HEK293 (cell line): ENCODE measurements at regions of chr6 and their contacts with region 1.

Region 1: GRCh38 chr6:10886691-10887535 is at the start of gene SYCP2L:
- H3K4me3 ChIP-seq: peak within 1 kb of the TSS; percentile 70
- H3K27ac ChIP-seq: peak within 1 kb of the TSS; percentile 77
- H3K4me1 ChIP-seq: no peaks in the 10 kb centered on the region
- CTCF ChIP-seq: peak; percentile 98

Region 2: GRCh38 chr6:10847684-10848083 is 39.2 kb before region 1 on chr6:
- CTCF ChIA-PET with region 1: interaction called, 10 read pairs
- POLR2A ChIA-PET with region 1: interaction called, 6 read pairs
- H3K4me3 ChIP-seq: no peak overlapping the region
- H3K27ac ChIP-seq: no peak overlapping the region
- H3K4me1 ChIP-seq: no peaks in the 10 kb centered on the region; the same call in 1 of the 2 replicates
- CTCF ChIP-seq: no peak

Region 3: DNA sequence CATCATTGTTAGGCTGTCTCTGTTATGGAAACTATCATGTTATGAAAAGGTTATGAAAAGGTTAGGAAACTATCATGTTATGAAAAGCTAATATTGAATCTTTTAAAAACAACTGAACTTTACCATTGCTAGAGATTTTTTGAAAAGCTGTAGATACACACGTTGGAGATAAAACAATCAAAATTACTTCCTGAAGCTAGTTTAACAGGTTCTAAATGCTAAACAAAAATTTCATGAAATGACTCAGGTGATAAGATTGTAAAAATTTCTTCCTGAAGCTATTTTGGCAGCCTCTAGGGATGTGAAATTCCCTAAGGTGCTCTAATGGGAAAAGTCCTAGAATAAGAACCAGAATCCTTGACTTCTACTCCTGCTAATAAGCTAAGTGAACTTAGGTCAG is 13.6 kb before region 1 on chr6:
- CTCF ChIA-PET with region 1: interaction called, 15 read pairs
- POLR2A ChIA-PET with region 1: interaction called, 6 read pairs
- H3K4me3 ChIP-seq: no peak overlapping the region
- H3K27ac ChIP-seq: no peak overlapping the region
- H3K4me1 ChIP-seq: no peaks in the 10 kb centered on the region
- CTCF ChIP-seq: no peak

Region 4: GRCh38 chr6:10901770-10902169 is 14.9 kb after region 1 on chr6:
- CTCF ChIA-PET with region 1: interaction called, 13 read pairs
- POLR2A ChIA-PET with region 1: interaction called, 10 read pairs
- H3K4me3 ChIP-seq: no peak overlapping the region
- H3K27ac ChIP-seq: no peak overlapping the region
- H3K4me1 ChIP-seq: no peaks in the 10 kb centered on the region
- CTCF ChIP-seq: no peak